ENCODE measurements at regions of chr22 and their contacts with region 1.

Region 1: GRCh38 chr22:38214256-38215056 is 12.7 kb downstream of the MAFF start:
- DNase-seq: peak in 1 of 2 donors; percentile 91
- H3K4me3 ChIP-seq: no peak overlapping the region
- CTCF ChIP-seq: no peak
- POLR2A ChIP-seq: no peak

Region 2: DNA sequence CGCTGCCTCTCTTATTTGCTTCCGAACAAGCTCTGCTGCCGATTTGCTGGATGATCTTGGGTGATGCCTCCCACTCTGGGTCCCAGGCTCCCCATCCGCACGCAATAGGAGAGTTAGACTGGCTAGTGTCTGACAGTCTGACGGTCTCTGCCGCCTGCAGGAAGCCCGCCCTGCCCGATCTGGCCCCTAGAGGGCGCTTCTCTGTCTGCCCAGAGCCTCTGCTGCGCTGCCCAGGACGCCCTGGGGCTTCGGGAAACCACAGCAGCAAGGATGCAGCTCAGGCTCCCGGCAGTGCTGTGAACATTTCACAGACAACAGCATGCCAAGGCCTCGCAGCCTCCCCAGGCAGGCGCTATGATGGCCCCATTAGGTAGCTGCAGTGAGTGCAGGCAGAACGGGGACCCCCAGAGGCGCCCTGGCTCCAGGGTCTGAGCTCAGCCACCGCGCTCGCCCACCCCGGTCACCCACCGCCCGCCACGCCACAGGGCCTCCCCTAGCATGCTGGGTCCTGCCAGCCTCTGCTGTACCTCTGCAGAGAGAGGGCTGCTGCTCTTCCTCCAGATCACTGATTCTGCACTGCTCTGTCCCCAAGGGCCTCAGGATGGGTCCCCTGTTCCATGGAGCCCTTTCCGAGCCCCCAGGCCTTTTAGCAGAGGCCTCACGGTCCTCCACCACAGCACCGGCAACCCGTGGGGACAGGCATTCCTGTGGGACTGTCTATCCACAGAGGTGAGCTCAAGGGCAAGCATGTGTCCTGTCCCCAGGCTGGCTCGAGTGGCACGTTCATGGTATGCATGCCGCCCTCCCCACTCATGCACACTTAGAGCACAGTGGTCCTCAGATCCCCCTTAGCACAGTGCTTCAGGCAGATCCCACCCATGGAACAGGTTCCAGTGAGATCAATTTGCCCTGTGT is 99.7 kb before region 1 on chr22:
- intact Hi-C with region 1: loop called (anchors 10 kb)
- DNase-seq: peak; percentile 78 to 96
- H3K4me3 ChIP-seq: no peak overlapping the region
- CTCF ChIP-seq: peak in 1 of 3 donors; percentile 88
- POLR2A ChIP-seq: no peak

Region 3: GRCh38 chr22:38485783-38486182 is 271.3 kb after region 1 on chr22:
- intact Hi-C with region 1: no loop called
- DNase-seq: no peak
- H3K4me3 ChIP-seq: no peak overlapping the region
- CTCF ChIP-seq: no peak
- POLR2A ChIP-seq: no peak